ENCODE measurements at regions of chr4 and their contacts with region 1.

Region 1: DNA sequence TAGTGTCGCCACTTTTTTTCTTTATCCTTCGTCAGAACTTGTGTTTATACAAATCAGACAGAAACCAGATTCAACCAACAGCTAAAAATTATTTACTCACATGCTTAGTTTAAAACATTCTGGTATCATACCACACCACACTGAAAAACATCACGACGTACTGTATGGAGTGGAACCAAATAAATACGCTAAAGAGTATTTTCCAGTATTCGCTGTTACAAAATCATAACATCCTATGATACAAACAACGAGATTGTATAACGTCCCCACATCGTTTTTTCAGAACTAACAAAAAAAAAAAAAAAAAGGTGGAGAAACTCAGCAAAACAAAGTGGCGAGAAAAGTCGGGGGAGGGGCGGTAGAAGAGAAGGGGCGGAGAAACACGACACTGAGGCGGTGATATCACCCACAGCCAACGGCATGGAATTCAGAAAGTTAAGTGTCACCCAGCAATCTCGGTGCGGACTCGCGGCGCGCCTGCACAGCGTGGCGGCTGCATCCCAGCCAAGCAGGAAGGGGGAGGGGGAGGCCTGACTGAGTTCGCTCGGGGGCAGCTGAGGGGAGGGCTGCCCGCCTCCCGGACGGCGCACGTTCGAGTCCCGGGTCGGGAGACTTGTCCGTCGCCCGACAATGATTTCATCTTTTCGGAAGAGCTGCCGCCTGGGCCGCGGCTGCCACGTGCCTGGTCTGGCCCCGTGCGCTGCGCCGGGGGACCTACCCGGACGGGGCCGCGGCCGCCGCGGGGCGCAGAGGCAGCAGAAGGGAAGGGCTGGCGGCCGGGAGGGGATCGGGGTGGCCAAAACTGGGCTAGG is 920 bp downstream of the SETD7 start:
- DNase-seq: peak; percentile 84 to 96 (median 95)
- H3K4me3 ChIP-seq: peak overlapping the region; percentile 76 to 92 (median 89)
- H3K27ac ChIP-seq: peak overlapping the region; percentile 11 to 76
- H3K4me1 ChIP-seq: peaks cover 7 to 57% (median 29%) of the 10 kb centered on the region in 4 experiments
- H3K27me3 ChIP-seq: peaks cover 0 to 8% (median 3%) of the 10 kb centered on the region in 5 experiments

Region 2: GRCh38 chr4:139054791-139055376 is 500.2 kb before region 1 on chr4:
- CTCF ChIA-PET with region 1: no interaction called
- POLR2A ChIA-PET with region 1: no interaction called
- DNase-seq: no peak
- H3K4me3 ChIP-seq: no peak overlapping the region
- H3K27ac ChIP-seq: no peak overlapping the region
- H3K4me1 ChIP-seq: no peaks in the 10 kb centered on the region
- H3K27me3 ChIP-seq: no peaks in the 10 kb centered on the region

Region 3: GRCh38 chr4:139374251-139374650 is 180.8 kb before region 1 on chr4:
- CTCF ChIA-PET with region 1: no interaction called
- POLR2A ChIA-PET with region 1: no interaction called
- DNase-seq: peak in 2 of 3 donors; percentile 16 to 21
- H3K4me3 ChIP-seq: no peak overlapping the region
- H3K27ac ChIP-seq: no peak overlapping the region
- H3K4me1 ChIP-seq: no peaks in the 10 kb centered on the region
- H3K27me3 ChIP-seq: no peaks in the 10 kb centered on the region

Region 4: DNA sequence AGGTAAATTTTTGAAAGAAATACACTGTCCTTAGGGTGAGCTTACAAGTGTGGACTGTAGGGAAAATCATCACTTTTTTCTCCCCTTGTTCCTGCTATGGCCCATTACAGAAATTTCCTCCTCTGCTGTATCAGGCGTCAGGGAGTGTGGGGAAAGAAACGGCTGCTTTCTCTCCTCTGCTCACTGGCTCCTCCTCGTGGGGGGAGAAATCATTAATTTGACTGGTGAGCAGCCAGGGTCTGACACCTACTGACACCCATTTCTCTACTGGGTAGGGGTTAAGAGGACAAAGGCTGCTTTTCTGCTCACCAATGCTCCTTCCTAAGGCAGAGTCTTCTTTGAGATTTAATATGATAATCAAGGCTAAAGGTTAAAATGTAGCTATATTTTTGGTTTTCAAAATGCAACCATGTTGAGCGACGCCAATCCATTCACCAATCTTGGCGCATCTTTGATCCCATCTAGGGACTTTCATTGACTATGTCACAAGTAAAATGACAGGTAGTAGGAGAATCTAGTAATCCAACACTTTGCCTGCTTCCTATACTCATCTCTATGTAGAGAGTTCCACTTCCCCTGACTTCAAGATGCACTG is 24.2 kb before region 1 on chr4:
- CTCF ChIA-PET with region 1: interaction called, 12 read pairs
- POLR2A ChIA-PET with region 1: interaction called, 4 read pairs
- DNase-seq: peak; percentile 48 to 65 (median 60)
- H3K4me3 ChIP-seq: no peak overlapping the region
- H3K27ac ChIP-seq: no peak overlapping the region
- H3K4me1 ChIP-seq: peaks cover 6 to 15% (median 12%) of the 10 kb centered on the region in 4 experiments
- H3K27me3 ChIP-seq: no peaks in the 10 kb centered on the region

Region 5: GRCh38 chr4:139540632-139541031 is 14.5 kb before region 1 on chr4:
- CTCF ChIA-PET with region 1: interaction called, 10 read pairs
- POLR2A ChIA-PET with region 1: no interaction called
- DNase-seq: no peak
- H3K4me3 ChIP-seq: no peak overlapping the region
- H3K27ac ChIP-seq: no peak overlapping the region
- H3K4me1 ChIP-seq: no peaks in the 10 kb centered on the region
- H3K27me3 ChIP-seq: no peaks in the 10 kb centered on the region

Measured in common myeloid progenitor, CD34-positive (primary cell).